T-cell (primary cell): ENCODE measurements at regions of chr1 and their contacts with region 1.

Region 1: DNA sequence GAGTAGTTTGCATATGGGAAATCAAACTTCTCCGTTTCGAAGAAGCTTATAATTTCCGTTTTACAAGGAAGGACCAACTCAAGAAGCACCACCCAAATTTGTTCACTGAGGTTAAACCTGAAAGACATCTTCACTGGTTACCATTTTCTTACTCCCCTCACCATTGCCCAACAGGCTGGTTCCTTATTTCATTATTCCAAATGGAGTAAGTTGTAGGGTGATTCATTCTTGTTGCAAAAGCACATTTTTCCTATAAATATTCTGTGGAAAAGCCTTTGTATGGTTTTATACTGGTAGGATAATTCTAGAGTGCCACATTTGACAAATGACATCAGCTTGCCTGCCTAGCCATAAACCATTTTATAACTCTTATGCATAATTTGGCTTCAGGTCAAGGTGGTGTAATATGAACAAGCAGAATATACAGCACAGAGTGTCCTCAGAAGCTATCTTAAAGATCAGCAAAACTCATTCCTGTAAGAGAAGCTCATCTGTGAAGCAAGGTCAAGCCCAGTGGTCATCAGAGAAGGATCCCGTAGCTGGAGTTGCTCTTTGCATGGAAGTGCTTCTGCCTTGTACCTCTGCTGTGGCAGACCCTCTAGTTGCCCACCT is 24.1 kb upstream of the C1orf21 start:
- DNase-seq: no peak
- ATAC-seq: no peak
- H3K4me3 ChIP-seq: no peak overlapping the region
- H3K4me3 Mint-ChIP-seq: no peak overlapping the region
- H3K27ac ChIP-seq: no peak overlapping the region
- H3K27ac Mint-ChIP-seq: no peak overlapping the region
- H3K4me1 ChIP-seq: no peaks in the 10 kb centered on the region
- H3K4me1 Mint-ChIP-seq: no peaks in the 10 kb centered on the region
- H3K27me3 ChIP-seq: peaks cover 0 to 6% of the 10 kb centered on the region in 2 experiments
- H3K27me3 Mint-ChIP-seq: peaks cover 5 to 12% of the 10 kb centered on the region in 2 donors

Region 2: DNA sequence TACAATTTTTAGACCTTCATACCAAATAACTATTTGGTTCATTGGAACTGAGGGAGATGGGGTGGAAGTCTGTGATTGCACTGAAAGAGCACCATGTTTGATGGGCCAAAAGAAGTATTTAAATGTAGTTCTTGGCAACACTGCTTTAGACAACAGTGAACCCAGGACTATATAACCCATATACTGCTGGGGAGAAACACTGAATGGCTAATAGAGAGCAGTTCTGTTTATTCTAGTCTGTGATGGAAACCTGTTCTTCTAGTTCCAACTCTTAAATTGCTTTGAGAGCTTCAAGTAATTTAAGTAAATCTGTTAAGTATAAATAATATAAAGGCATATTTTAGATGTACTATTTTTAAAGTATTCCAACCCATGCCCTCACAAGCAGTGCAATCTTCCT is 515.2 kb after region 1 on chr1:
- CTCF ChIA-PET with region 1: no interaction called
- POLR2A ChIA-PET with region 1: interaction called in 1 of 2 experiments, 11 read pairs
- DNase-seq: no peak
- ATAC-seq: no peak
- H3K4me3 ChIP-seq: no peak overlapping the region
- H3K4me3 Mint-ChIP-seq: no peak overlapping the region
- H3K27ac ChIP-seq: no peak overlapping the region
- H3K27ac Mint-ChIP-seq: no peak overlapping the region
- H3K4me1 ChIP-seq: no peaks in the 10 kb centered on the region
- H3K4me1 Mint-ChIP-seq: peaks cover 0 to 11% (median 5%) of the 10 kb centered on the region in 3 donors
- H3K27me3 ChIP-seq: no peaks in the 10 kb centered on the region
- H3K27me3 Mint-ChIP-seq: no peaks in the 10 kb centered on the region